ENCODE measurements at regions of chr18 and their contacts with region 1.

Region 1: DNA sequence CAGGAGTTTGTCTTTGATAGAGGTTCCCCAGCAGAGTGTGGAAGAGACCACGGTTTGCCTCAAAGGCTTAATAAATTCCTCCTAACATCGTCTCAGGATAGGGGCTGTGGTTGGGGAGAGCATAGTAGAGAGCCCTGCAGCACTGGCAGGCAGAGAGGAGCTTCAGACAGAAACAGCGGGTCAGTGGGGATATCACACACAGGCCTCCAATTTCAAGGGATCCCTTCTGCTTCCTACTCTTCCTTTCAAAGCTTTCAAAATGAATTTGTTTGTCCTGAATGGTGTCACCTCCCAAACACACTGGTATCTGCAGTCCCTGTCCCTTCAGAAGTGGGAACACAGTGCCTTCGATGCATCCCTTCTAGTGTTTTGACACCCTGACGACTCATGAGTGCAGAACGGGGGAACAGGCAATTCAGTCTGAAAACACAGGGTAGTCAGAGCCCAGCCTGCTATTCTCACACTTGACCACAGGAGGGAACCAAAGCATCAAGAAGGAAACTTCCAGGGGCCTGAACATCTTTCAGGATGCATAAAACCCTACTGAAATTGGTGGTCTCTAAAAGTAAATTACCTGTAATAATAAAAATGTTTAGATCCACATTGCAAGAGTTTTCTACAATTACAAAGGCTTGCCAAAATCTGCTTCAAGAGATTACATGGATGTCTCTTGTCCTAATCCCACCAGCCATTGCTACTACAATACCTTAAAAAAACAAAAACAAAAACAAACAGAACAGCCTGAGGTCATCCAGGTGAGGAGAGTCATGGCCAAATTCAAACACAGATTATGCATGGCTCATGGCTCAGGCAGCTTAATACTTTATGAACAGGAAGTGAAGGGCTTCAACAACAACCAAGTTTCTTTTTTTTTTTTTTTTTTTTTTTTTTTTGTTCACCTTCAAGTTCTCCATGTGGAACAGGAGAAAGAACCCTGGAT is 49.8 kb downstream of the SLC14A2 start:
- DNase-seq: peak; percentile 42 to 61 (median 42)
- ATAC-seq: peak; percentile 64 to 71
- H3K4me3 ChIP-seq: no peak overlapping the region
- H3K27ac ChIP-seq: no peak overlapping the region
- H3K4me1 ChIP-seq: no peaks in the 10 kb centered on the region
- H3K27me3 ChIP-seq: no peaks in the 10 kb centered on the region

Region 2: DNA sequence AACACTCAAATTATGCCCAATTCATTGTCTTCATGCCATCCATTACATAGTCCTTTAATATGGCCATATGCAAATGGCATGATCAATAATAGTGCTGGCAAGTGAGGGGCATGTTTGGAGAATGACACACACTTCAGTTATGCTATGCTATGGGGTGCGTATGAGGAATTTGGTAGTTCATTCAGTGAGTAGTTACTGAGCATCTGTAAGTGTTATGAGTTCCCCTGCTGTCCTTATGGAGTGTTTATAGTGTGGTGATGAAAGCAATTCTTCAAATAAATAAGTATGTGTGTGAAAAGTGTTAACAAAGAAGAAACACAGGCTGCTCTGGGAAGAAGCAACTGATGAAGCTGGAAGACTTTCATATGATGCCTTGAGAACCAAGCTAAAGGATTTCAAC is 433.5 kb before region 1 on chr18:
- intact Hi-C with region 1: no loop called
- DNase-seq: no peak
- ATAC-seq: no peak
- H3K4me3 ChIP-seq: no peak overlapping the region
- H3K27ac ChIP-seq: no peak overlapping the region
- H3K4me1 ChIP-seq: no peaks in the 10 kb centered on the region
- H3K27me3 ChIP-seq: no peaks in the 10 kb centered on the region

Region 3: GRCh38 chr18:45879681-45880655 is 214.9 kb after region 1 on chr18:
- intact Hi-C with region 1: loop called in 1 of 4 experiments (anchors 5 kb)
- DNase-seq: peak; percentile 68 to 91 (median 87)
- ATAC-seq: peak; percentile 84 to 98
- H3K4me3 ChIP-seq: no peak overlapping the region
- H3K27ac ChIP-seq: no peak overlapping the region
- H3K4me1 ChIP-seq: no peaks in the 10 kb centered on the region
- H3K27me3 ChIP-seq: no peaks in the 10 kb centered on the region

Region 4: DNA sequence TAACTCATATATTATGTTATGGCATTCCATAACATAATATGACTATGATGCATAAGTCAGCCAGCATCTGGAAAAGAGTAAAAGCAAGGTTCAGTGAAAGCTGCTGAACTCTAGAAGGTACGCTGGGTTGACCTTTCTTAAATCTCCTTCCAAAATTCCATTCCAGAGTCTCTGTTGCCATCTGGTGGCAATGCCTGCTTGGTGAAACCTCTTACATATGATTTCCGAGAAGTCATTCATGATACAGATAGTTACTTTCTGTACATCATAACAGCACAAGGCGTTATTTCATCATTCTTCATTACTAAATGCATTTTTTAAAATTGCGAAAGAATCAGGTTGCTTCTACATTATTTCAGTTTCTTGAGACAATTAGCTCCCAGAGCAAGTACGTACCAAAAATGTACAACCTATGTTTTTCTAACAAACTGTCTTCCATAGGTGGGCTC is 309.0 kb after region 1 on chr18:
- intact Hi-C with region 1: loop called in 1 of 4 experiments (anchors 5 kb)
- DNase-seq: peak in 2 of 3 donors; percentile 30 to 66
- ATAC-seq: peak; percentile 81 to 83
- H3K4me3 ChIP-seq: no peak overlapping the region
- H3K27ac ChIP-seq: no peak overlapping the region
- H3K4me1 ChIP-seq: no peaks in the 10 kb centered on the region
- H3K27me3 ChIP-seq: no peaks in the 10 kb centered on the region

Region 5: DNA sequence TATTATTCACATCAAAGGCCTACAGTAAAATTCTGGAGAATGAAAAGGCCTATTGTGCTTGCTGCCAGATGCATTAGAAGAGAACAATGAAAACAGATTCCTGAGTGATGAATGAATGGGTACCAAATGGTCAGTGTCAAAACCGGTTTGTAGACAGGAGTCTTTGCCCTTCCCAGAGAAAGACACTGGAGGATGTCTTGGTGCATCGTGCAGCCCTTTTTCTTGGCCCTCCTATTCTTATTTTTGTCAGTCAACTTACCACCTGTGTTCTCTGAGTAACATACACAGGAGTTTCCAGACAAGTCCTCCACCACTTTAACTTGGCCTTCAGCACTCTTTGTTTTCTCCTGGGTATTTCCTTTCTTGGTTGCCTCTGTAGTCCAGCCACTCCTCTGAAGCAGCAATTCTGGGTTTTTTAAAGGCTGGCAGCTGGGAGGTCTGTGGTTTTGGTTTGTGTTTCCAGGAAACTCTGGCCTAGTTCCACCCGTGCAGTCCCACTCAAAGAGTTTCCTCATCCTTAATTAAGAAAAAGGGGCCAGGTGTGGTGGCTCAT is 377.6 kb after region 1 on chr18:
- intact Hi-C with region 1: no loop called
- DNase-seq: no peak
- ATAC-seq: no peak
- H3K4me3 ChIP-seq: no peak overlapping the region
- H3K27ac ChIP-seq: no peak overlapping the region
- H3K4me1 ChIP-seq: no peaks in the 10 kb centered on the region
- H3K27me3 ChIP-seq: no peaks in the 10 kb centered on the region

Region 6: GRCh38 chr18:46073474-46074331 is 408.6 kb after region 1 on chr18:
- intact Hi-C with region 1: loop called in 1 of 4 experiments (anchors 10 kb)
- DNase-seq: no peak
- ATAC-seq: peak; percentile 19 to 23
- H3K4me3 ChIP-seq: no peak overlapping the region
- H3K27ac ChIP-seq: no peak overlapping the region
- H3K4me1 ChIP-seq: no peaks in the 10 kb centered on the region
- H3K27me3 ChIP-seq: no peaks in the 10 kb centered on the region